ENCODE measurements at regions of chr5 and their contacts with region 1.

Region 1: GRCh38 chr5:95053253-95053652 is 231.6 kb downstream of the MCTP1 start:
- DNase-seq: no peak
- H3K4me3 ChIP-seq: no peak overlapping the region
- H3K27ac ChIP-seq: no peak overlapping the region
- H3K4me1 ChIP-seq: peaks cover 0 to 2% (median 0%) of the 10 kb centered on the region in 4 experiments; a peak in 1 of 7 replicates
- H3K27me3 ChIP-seq: no peaks in the 10 kb centered on the region
- CTCF ChIP-seq: no peak
- EP300 ChIP-seq: no peak
- POLR2A ChIP-seq: no peak
- RAD21 ChIP-seq: no peak; a peak in 1 of 4 replicates

Region 2: DNA sequence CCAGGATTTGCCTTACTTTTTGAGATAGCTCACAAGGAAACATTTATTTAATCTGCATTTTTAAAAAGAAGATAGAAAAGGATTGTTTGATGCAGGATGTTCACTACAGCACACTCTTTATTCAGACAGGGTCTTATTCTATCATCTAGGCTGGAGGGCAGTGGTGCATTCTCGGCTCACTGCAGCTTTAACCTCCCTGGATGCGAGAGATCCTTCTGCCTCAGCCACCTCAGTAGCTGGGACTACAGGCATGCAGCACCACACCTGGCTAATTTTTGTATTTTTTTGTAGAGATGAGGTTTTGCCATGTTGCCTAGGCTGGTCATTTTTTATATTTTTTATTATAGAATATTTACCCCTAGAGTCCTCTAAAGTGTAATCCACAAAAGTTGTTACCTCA is 10.2 kb after region 1 on chr5:
- CTCF ChIA-PET with region 1: interaction called, 16 read pairs
- POLR2A ChIA-PET with region 1: no interaction called
- DNase-seq: no peak
- H3K4me3 ChIP-seq: no peak overlapping the region
- H3K27ac ChIP-seq: no peak overlapping the region
- H3K4me1 ChIP-seq: no peaks in the 10 kb centered on the region
- H3K27me3 ChIP-seq: no peaks in the 10 kb centered on the region
- CTCF ChIP-seq: no peak
- EP300 ChIP-seq: no peak
- POLR2A ChIP-seq: no peak
- RAD21 ChIP-seq: no peak